ENCODE measurements at regions of chr16 and their contacts with region 1.

Region 1: DNA sequence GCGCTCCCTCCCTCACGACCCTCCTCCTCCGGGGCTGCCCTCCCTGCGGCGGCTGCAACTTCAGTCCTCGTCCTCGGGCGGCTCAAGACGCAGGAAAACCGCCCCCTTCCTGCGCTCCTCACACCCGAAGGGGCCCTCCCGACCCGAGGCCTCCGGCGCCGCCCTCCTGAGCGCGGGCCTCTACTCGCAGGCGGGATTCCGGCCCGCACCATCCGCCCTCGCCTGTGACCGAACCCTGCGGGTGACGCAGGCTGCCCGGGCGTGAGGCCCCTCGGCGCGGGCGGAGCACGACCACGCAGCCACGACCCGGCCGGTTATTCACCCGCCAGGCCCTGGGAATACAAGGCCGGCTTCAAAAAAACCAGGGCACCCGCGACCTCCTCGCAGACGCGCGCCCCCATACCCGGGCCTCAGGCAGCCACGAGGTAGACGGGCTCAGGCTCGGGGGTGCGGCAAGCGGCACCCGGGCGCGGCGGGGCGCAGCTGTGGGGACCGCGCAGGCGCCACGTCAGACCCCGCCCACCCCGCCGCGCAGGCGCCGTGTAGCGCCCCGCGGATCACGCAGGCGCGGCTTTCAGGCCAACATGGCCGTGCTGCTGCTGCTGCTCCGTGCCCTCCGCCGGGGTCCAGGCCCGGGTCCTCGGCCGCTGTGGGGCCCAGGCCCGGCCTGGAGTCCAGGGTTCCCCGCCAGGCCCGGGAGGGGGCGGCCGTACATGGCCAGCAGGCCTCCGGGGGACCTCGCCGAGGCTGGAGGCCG is at the start of gene SPG7:
- DNase-seq: peak; percentile 94
- ATAC-seq: peak; percentile 74
- H3K4me3 Mint-ChIP-seq: peak within 1 kb of the TSS; percentile 90
- H3K27ac Mint-ChIP-seq: peak within 1 kb of the TSS; percentile 97
- H3K4me1 Mint-ChIP-seq: peaks cover 31% of the 10 kb centered on the region
- H3K27me3 Mint-ChIP-seq: no peaks in the 10 kb centered on the region
- total RNA-seq, gene SPG7: 68.6 to 76.7 TPM

Region 2: GRCh38 chr16:89093602-89094251 is 414.3 kb before region 1 on chr16 and contains the start of gene ACSF3:
- CTCF ChIA-PET with region 1: no interaction called
- POLR2A ChIA-PET with region 1: no interaction called
- intact Hi-C with region 1: loop called in 1 of 2 experiments (anchors 10 kb)
- DNase-seq: peak; percentile 78
- ATAC-seq: peak; percentile 35
- H3K4me3 Mint-ChIP-seq: peak within 1 kb of the TSS; percentile 98
- H3K27ac Mint-ChIP-seq: peak within 1 kb of the TSS; percentile 95
- H3K4me1 Mint-ChIP-seq: peaks cover 45% of the 10 kb centered on the region
- H3K27me3 Mint-ChIP-seq: no peaks in the 10 kb centered on the region
- total RNA-seq, gene ACSF3: 39.7 to 41.7 TPM

Region 3: GRCh38 chr16:89241187-89242007 is 266.6 kb before region 1 on chr16:
- CTCF ChIA-PET with region 1: no interaction called
- POLR2A ChIA-PET with region 1: no interaction called
- intact Hi-C with region 1: loop called (anchors 1 to 2 kb)
- DNase-seq: peak; percentile 83
- ATAC-seq: peak; percentile 83
- H3K4me3 Mint-ChIP-seq: peak overlapping the region; percentile 87
- H3K27ac Mint-ChIP-seq: peak overlapping the region; percentile 100
- H3K4me1 Mint-ChIP-seq: peaks cover 14% of the 10 kb centered on the region
- H3K27me3 Mint-ChIP-seq: no peaks in the 10 kb centered on the region

Region 4: DNA sequence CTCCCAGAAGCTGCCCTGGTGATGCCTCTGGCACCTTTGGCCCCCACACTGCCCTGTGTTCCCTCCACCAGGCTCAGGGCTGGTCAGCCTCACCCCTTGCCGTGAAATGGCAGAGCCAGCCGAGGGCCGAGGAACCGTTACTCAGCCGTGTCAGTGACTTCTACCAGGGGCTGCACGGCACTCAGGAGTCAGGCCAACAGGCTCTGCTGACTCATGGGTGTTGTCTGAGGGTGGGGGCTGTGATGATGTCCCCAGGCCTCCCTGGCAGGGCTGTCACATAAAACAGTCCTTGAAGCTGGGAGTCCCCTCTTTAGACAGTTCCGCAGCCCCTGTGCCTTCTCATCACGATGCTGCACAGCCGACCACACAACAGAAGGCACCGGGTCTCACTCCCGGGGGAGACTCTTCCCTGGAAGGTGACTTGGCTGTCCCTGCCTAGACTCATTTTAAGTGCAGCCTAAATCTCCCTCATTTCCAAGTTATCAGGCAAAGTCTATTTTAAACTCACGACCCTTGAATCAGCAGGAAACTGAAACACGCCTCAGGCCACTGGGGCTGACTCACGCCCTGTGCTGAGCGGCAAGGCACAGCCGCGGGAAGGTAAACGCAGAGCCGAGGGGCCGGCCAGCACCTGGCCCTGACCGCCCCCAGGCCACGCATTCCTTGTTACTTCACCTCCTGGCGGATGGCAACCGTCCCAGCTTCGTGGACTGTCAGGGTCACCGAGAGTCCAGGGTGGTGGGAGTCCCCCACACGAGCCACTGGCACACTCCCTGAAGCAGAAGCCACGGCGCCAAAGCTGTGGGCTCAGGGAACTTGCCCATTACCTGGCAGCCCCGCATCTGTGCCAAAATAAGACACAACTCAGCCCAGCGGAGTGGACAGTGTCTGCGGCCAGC is 187.9 kb before region 1 on chr16:
- CTCF ChIA-PET with region 1: interaction called, 3 read pairs
- POLR2A ChIA-PET with region 1: interaction called, 6 read pairs
- intact Hi-C with region 1: loop called (anchors 1 to 5 kb)
- DNase-seq: peak; percentile 75
- ATAC-seq: peak; percentile 34
- H3K4me3 Mint-ChIP-seq: no peak overlapping the region
- H3K27ac Mint-ChIP-seq: peak overlapping the region; percentile 75
- H3K4me1 Mint-ChIP-seq: peaks cover 95% of the 10 kb centered on the region
- H3K27me3 Mint-ChIP-seq: no peaks in the 10 kb centered on the region

Region 5: GRCh38 chr16:89331371-89332109 is 176.5 kb before region 1 on chr16:
- CTCF ChIA-PET with region 1: interaction called, 3 read pairs
- POLR2A ChIA-PET with region 1: no interaction called
- intact Hi-C with region 1: loop called (anchors 1 to 5 kb)
- DNase-seq: no peak
- ATAC-seq: no peak
- H3K4me3 Mint-ChIP-seq: no peak overlapping the region
- H3K27ac Mint-ChIP-seq: peak overlapping the region; percentile 37
- H3K4me1 Mint-ChIP-seq: peaks cover 88% of the 10 kb centered on the region
- H3K27me3 Mint-ChIP-seq: no peaks in the 10 kb centered on the region

Measured in activated CD4-positive, alpha-beta T cell treated with anti-CD3 and anti-CD28 coated beads for 36 hours (primary cell).